ENCODE measurements at regions of chr12 and their contacts with region 1.

Region 1: DNA sequence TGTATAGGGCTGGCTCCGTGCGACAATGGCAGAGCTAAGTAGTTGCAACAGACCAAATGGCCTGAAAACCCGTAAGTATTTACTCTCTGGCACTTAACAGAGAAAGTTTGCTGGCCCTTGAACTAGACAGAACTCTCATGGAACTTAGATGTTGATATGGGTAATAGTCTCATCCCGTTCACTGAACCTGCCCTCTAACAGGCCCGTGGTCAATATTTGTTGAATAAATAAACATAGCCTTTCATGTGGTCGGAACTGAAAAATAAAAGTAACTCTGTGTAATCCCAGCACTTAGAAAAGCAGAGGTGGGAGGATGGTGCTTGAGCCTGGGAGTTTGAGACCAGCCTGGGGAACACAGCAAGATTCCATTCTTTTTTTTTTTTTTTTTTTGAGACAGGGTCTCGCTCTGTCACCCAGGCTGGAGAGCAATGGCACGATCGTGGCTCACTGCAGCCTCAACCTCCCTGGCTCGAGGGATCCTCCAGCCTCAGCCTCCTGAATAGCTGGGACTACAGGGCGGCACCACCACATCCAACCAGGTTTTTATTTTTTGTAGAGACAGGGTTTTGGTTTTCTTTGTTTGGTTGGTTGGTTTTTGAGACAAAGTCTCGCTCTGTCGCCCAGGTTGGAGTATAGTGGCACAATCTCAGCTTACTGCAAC is 29.7 kb downstream of the KDM2B start:
- DNase-seq: no peak
- ATAC-seq: no peak
- H3K4me3 ChIP-seq: no peak overlapping the region
- H3K27ac ChIP-seq: no peak overlapping the region
- H3K4me1 ChIP-seq: no peaks in the 10 kb centered on the region
- CTCF ChIP-seq: no peak
- EP300 ChIP-seq: no peak
- POLR2A ChIP-seq: no peak
- RAD21 ChIP-seq: no peak

Region 2: DNA sequence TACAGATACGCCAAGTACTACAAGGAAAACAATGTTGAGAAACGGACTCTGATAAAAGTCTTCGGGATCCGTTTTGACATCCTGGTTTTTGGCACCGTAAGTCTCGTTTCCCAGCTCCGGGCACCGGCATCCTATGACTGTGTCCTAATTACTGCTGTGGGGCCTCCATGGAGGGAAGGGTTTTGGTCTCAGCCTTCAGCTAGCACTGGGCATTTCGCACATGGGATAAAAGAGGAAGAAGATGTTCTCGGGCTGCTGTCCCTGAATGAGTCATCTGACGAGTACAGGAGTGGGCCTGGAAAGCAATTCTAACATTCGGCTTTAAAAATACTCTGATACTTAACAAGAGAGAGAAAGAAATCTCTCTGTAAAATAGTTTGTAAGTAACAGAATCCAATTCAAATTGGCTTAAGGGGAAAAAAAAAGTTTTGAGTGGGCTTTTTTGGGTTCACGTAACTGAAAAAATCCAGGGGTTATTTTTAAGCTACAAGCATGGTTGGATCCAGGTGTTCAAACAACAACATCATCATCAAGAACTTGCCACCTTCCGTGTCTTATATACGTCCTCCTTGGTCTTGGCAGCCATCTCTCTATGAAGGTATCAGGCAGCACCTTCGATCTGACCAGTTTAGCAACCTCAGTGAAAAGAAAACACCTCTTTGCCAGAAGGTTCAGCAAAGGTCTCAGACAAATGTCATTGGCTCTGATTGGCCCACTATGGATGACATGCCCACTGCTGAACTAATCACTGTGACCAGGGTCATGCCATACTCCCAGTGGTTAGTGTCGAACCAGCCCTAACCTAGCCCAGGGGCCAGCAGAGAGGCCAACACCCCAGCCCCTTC is 375.5 kb before region 1 on chr12:
- CTCF ChIA-PET with region 1: no interaction called
- POLR2A ChIA-PET with region 1: no interaction called
- DNase-seq: no peak
- ATAC-seq: no peak
- H3K4me3 ChIP-seq: no peak overlapping the region
- H3K27ac ChIP-seq: no peak overlapping the region
- H3K4me1 ChIP-seq: no peaks in the 10 kb centered on the region
- CTCF ChIP-seq: no peak
- EP300 ChIP-seq: no peak
- POLR2A ChIP-seq: no peak
- RAD21 ChIP-seq: no peak

Region 3: DNA sequence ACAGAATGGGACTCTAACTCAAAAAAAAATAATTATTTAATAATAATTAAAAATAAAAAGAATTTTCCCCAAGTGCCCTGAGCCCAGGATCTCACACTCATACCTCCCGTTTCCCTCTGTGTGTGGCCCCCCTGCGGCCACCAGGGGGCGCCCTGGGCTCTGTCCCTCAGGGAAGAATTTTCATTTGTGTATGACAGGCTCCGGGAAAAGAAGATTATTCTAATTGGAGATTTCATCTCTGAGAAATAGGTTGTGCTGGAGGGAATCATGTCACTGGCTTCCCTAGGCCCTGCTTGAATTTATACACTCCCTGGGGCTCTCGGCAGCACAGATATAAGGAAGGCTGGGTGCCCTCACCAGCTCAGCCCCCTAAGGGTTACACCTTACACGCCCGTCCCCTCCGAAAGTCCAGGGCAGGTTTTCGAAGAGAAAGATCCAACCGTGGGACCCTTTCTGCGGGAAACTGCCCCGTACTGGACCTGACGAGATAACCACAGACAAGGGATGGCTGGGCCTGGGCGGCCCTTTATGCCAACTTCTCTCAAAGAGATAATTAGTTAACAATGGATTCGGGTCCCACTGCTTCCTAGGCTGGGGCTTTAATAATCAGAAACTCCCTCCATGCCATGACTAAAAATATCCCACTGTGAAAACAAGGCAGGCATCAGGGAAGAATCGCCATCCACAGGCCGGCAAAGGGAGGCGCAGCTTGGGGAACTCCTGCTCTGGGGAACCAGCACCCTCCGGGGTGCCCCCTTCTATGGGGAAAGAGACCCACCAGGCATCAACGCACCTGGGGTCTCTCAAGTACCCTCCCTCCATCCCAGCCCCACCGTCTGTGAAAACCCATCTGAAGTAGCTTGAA is 50.9 kb before region 1 on chr12:
- CTCF ChIA-PET with region 1: interaction called, 10 read pairs
- POLR2A ChIA-PET with region 1: no interaction called
- DNase-seq: peak; percentile 65 to 92
- ATAC-seq: peak; percentile 89 to 95
- H3K4me3 ChIP-seq: no peak overlapping the region
- H3K27ac ChIP-seq: peak overlapping the region in 1 of 2 experiments; percentile 6; a peak in 1 of 6 replicates
- H3K4me1 ChIP-seq: 0 out of 3 replicates have a peak, but pooled peaks cover 3% of the 10 kb centered on the region
- CTCF ChIP-seq: peak; percentile 98
- EP300 ChIP-seq: no peak
- POLR2A ChIP-seq: no peak
- RAD21 ChIP-seq: peak; percentile 73 to 78

Region 4: DNA sequence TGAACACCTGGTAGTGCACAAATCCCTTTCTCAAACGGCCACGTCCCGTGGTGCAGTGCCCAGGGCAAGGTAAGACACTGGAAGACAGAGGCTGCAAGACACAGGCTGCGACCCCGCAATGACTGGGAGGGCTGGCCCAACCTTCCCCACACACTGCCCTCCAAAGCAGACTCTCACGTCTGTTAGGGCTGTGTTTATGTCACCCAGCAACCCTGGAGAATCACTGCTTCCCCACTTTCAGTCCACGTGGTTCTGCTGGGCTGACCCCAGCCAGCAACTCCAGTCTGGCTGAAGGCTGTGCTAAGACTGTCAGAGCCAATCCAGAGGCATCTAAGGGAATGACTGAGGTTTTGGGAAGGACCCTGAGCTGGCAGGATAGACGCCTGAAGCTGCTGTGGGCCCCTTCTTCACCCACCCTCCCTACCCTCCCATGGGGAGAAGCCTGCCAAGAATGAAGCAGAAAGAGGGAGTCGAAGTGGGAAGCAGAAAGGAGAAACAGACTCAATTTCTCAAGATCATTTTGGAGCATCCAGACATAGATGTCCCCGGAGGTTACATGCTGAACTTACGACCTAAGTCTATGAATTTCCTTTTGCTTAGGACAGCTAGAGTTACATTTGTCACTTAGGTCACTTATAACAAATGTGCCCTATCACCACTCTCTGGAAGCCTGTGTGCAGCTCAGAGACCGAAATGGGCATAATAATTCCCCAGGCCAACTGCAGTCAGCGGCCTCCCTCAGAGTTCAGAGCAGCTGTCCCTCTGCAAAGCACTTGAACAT is 18.1 kb after region 1 on chr12:
- CTCF ChIA-PET with region 1: interaction called, 49 read pairs
- POLR2A ChIA-PET with region 1: no interaction called
- DNase-seq: no peak
- ATAC-seq: peak; percentile 66 to 77; a peak in 5 of 6 replicates
- H3K4me3 ChIP-seq: no peak overlapping the region
- H3K27ac ChIP-seq: no peak overlapping the region
- H3K4me1 ChIP-seq: no peaks in the 10 kb centered on the region
- CTCF ChIP-seq: no peak
- EP300 ChIP-seq: no peak
- POLR2A ChIP-seq: no peak
- RAD21 ChIP-seq: no peak

Region 5: DNA sequence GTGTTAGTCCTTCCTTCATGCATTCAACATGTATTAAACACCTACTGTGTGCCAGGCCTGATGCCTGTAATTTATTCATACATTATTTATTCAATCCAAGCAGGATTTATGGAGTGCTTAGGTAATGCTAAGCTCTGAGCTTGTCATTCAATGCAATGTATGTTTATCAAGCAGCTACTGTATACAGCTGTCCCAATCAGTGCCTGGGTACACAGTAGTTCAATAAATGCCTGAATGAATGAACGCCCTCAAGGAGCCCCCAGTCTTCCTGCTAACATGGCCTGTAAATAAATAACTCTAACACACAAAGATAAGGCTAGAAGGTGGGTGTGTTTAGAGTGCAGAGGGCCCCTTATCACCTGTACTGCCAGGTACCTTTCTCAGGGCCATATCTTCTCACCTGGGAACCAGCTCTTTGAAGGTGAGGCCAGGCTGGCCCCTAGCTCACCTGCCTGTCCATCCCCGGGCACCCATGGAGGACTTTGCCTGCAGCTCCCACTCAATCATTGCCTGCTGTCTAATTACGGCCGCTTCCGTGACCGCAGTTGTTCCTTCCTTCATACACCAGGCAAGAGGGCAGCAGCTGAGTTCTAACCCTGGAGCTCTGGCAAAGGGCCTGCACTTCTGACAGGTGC is 49.7 kb after region 1 on chr12:
- CTCF ChIA-PET with region 1: interaction called, 15 read pairs
- POLR2A ChIA-PET with region 1: no interaction called
- DNase-seq: no peak
- ATAC-seq: no peak
- H3K4me3 ChIP-seq: no peak overlapping the region
- H3K27ac ChIP-seq: no peak overlapping the region
- H3K4me1 ChIP-seq: peaks cover 7% of the 10 kb centered on the region; the same call in 2 of the 3 replicates
- CTCF ChIP-seq: no peak
- EP300 ChIP-seq: no peak
- POLR2A ChIP-seq: no peak
- RAD21 ChIP-seq: no peak

Region 6: DNA sequence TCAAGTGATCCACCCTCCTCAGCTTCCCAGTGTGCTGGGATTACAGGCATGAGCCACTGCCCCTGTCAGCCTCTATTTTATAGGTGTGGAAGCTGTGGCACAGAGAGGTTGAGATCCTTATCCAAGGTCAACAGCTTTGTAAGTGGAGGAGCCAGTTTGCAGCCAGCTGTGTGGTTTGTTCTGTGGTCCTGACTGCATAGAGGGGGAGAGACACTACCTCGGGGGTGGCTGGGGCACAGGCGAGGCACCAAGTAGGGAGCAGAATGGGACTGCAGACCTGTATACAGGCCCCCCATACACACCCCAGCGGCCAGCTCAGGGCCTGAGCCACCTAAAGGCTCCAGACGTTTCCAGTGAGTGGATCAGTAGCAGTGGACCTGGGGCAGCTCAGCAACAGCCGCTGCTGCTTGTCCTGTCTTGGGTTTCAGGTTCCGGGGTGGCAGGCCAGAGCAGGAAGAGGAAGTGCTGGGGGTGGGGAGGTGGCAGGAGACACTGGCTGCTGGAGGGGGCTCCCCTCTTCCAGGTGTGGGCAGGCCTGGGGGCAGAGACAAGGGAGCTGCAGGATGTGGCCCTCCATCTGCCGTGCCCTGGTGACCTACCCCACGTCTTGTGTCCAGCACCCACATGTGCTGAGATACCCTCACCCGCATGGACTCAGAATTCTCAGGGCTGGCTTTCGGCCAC is 86.3 kb after region 1 on chr12:
- CTCF ChIA-PET with region 1: interaction called, 10 read pairs
- POLR2A ChIA-PET with region 1: no interaction called
- DNase-seq: no peak
- ATAC-seq: peak in 1 of 2 experiments; percentile 11; a peak in 1 of 6 replicates
- H3K4me3 ChIP-seq: no peak overlapping the region
- H3K27ac ChIP-seq: no peak overlapping the region
- H3K4me1 ChIP-seq: peaks cover 9% of the 10 kb centered on the region; the same call in 2 of the 3 replicates
- CTCF ChIP-seq: no peak
- EP300 ChIP-seq: no peak
- POLR2A ChIP-seq: no peak
- RAD21 ChIP-seq: no peak

Region 7: GRCh38 chr12:121678716-121679580 is 127.8 kb after region 1 on chr12:
- CTCF ChIA-PET with region 1: interaction called, 126 read pairs
- POLR2A ChIA-PET with region 1: no interaction called
- DNase-seq: no peak
- ATAC-seq: peak; percentile 13 to 21; a peak in 3 of 6 replicates
- H3K4me3 ChIP-seq: no peak overlapping the region
- H3K27ac ChIP-seq: no peak overlapping the region
- H3K4me1 ChIP-seq: no peaks in the 10 kb centered on the region
- CTCF ChIP-seq: no peak
- EP300 ChIP-seq: no peak
- POLR2A ChIP-seq: no peak
- RAD21 ChIP-seq: no peak

Region 8: GRCh38 chr12:121712461-121713256 is 161.6 kb after region 1 on chr12 and contains the start of gene TMEM120B:
- CTCF ChIA-PET with region 1: no interaction called
- POLR2A ChIA-PET with region 1: no interaction called
- DNase-seq: peak; percentile 70 to 75
- ATAC-seq: peak; percentile 78 to 81
- H3K4me3 ChIP-seq: peak within 1 kb of the TSS; percentile 69
- H3K27ac ChIP-seq: peak within 1 kb of the TSS; percentile 73 to 86
- H3K4me1 ChIP-seq: peaks cover 32% of the 10 kb centered on the region
- CTCF ChIP-seq: peak; percentile 11; the same call in 1 of the 3 replicates
- EP300 ChIP-seq: no peak
- POLR2A ChIP-seq: peak; percentile 97
- RAD21 ChIP-seq: no peak
- polyA plus RNA-seq, gene TMEM120B: 13.2 and 18.2 TPM in 2 replicates

Region 9: GRCh38 chr12:122078141-122079032 is 527.3 kb after region 1 on chr12 and contains the start of gene MLXIP:
- CTCF ChIA-PET with region 1: no interaction called
- POLR2A ChIA-PET with region 1: no interaction called
- DNase-seq: peak; percentile 94
- ATAC-seq: peak; percentile 83 to 86
- H3K4me3 ChIP-seq: peak within 1 kb of the TSS; percentile 94
- H3K27ac ChIP-seq: peak within 1 kb of the TSS; percentile 88 to 98
- H3K4me1 ChIP-seq: peaks cover 46% of the 10 kb centered on the region
- CTCF ChIP-seq: no peak
- EP300 ChIP-seq: no peak
- POLR2A ChIP-seq: peak; percentile 67
- RAD21 ChIP-seq: no peak
- polyA plus RNA-seq, gene MLXIP: 7.0 and 11.6 TPM in 2 replicates